ENCODE measurements at regions of chr14 and their contacts with region 1.

Region 1: GRCh38 chr14:95534299-95535225 is at the start of gene GLRX5:
- DNase-seq: peak; percentile 100
- ATAC-seq: peak; percentile 86
- H3K4me3 ChIP-seq: peak within 1 kb of the TSS; percentile 71
- H3K27ac ChIP-seq: peak within 1 kb of the TSS; percentile 90
- H3K4me1 ChIP-seq: peaks cover 13% of the 10 kb centered on the region
- H3K27me3 ChIP-seq: no peaks in the 10 kb centered on the region
- CTCF ChIP-seq: no peak
- POLR2A ChIP-seq: peak; percentile 68
- RAD21 ChIP-seq: no peak
- total RNA-seq, gene GLRX5: 32.4 and 59.2 TPM in 2 replicates

Region 2: DNA sequence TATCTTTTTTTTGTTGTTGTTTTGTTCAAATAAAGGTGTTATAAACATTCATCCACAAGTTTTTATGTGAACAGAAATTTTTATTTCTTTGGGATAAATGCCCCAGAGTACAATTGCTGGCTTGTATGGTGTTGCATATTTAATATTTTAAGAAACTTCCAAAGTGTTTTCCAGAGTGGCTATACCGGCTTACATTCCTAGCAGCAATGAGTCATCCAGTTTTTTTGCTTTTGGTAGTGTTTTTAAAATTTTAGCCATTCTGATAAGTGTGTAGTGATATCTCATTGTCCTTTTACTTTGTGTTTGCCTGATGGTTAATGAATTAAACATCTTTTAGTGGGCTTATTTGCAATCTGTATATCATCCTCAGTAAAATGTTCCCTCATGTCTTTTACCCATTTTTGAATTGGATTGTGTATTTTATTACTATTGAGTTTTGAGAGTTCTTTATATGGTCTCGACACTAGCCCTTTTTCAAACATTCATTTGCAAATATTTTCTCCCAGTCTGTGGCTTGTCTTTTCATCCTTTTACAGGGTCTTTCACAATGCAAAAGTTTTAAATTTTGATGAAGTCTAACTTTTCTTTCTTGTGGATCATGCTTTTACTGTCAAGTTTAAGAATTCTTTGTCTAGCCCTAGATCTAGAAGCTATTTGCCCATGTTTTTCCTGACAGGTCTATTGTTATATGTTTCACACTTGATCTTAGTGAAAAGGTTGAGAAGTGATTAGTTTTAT is 1330.9 kb before region 1 on chr14:
- CTCF ChIA-PET with region 1: no interaction called
- POLR2A ChIA-PET with region 1: interaction called, 12 read pairs
- dilution Hi-C with region 1: no loop called
- in situ Hi-C with region 1: no loop called
- intact Hi-C with region 1: no loop called
- DNase-seq: no peak
- ATAC-seq: no peak
- H3K4me3 ChIP-seq: no peak overlapping the region
- H3K27ac ChIP-seq: no peak overlapping the region
- H3K4me1 ChIP-seq: no peaks in the 10 kb centered on the region
- H3K27me3 ChIP-seq: no peaks in the 10 kb centered on the region; the same call in 1 of the 2 replicates
- CTCF ChIP-seq: no peak
- POLR2A ChIP-seq: no peak
- RAD21 ChIP-seq: no peak

Region 3: GRCh38 chr14:95123891-95124579 is 410.5 kb before region 1 on chr14:
- CTCF ChIA-PET with region 1: no interaction called
- POLR2A ChIA-PET with region 1: no interaction called
- dilution Hi-C with region 1: no loop called
- in situ Hi-C with region 1: no loop called
- intact Hi-C with region 1: loop called (anchors 10 kb)
- DNase-seq: no peak
- ATAC-seq: no peak
- H3K4me3 ChIP-seq: no peak overlapping the region
- H3K27ac ChIP-seq: no peak overlapping the region
- H3K4me1 ChIP-seq: peaks cover 5% of the 10 kb centered on the region
- H3K27me3 ChIP-seq: no peaks in the 10 kb centered on the region
- CTCF ChIP-seq: no peak
- POLR2A ChIP-seq: no peak
- RAD21 ChIP-seq: no peak

Region 4: DNA sequence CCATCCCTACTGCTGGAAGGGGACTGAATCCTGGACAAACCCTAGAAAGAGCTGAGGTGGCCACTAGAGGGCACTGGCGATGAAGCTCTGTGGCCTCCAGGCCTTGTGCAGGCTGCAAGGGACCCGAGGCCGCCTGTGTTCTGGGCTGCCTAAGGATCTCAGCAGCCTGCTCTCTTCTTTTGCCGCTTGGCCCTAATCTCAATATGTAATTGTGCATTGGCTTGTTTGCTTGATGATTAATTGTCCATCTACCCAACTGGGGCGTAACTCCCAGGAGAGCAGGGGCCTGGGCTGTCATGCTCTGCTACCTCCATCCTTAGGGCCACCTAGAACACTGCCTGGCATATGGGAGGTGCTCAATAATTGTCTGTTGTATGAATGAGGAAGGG is 91.9 kb before region 1 on chr14:
- CTCF ChIA-PET with region 1: interaction called, 5 read pairs
- POLR2A ChIA-PET with region 1: interaction called, 3 read pairs
- dilution Hi-C with region 1: no loop called
- in situ Hi-C with region 1: loop called (anchors 5 kb)
- intact Hi-C with region 1: loop called (anchors 1 kb)
- DNase-seq: peak; percentile 76
- ATAC-seq: peak; percentile 95
- H3K4me3 ChIP-seq: no peak overlapping the region
- H3K27ac ChIP-seq: no peak overlapping the region
- H3K4me1 ChIP-seq: peaks cover 5% of the 10 kb centered on the region
- H3K27me3 ChIP-seq: no peaks in the 10 kb centered on the region
- CTCF ChIP-seq: peak; percentile 83
- POLR2A ChIP-seq: no peak
- RAD21 ChIP-seq: peak; percentile 95

Region 5: GRCh38 chr14:96268431-96269358 is 734.1 kb after region 1 on chr14:
- CTCF ChIA-PET with region 1: no interaction called
- POLR2A ChIA-PET with region 1: no interaction called
- dilution Hi-C with region 1: no loop called
- in situ Hi-C with region 1: loop called (anchors 25 kb)
- intact Hi-C with region 1: loop called (anchors 10 kb)
- DNase-seq: peak; percentile 99
- ATAC-seq: peak; percentile 76
- H3K4me3 ChIP-seq: no peak overlapping the region
- H3K27ac ChIP-seq: peak overlapping the region; percentile 75
- H3K4me1 ChIP-seq: peaks cover 38% of the 10 kb centered on the region
- H3K27me3 ChIP-seq: no peaks in the 10 kb centered on the region
- CTCF ChIP-seq: no peak
- POLR2A ChIP-seq: 0 out of 2 replicates have a peak, but pooled peaks have one; percentile 7
- RAD21 ChIP-seq: peak; percentile 29; the same call in 1 of the 2 replicates

Region 6: GRCh38 chr14:96445844-96446710 is 911.5 kb after region 1 on chr14:
- CTCF ChIA-PET with region 1: no interaction called
- POLR2A ChIA-PET with region 1: no interaction called
- dilution Hi-C with region 1: no loop called
- in situ Hi-C with region 1: no loop called
- intact Hi-C with region 1: no loop called
- DNase-seq: no peak
- ATAC-seq: no peak
- H3K4me3 ChIP-seq: no peak overlapping the region
- H3K27ac ChIP-seq: no peak overlapping the region
- H3K4me1 ChIP-seq: no peaks in the 10 kb centered on the region
- H3K27me3 ChIP-seq: peaks cover 3% of the 10 kb centered on the region; the same call in 1 of the 2 replicates
- CTCF ChIP-seq: no peak
- POLR2A ChIP-seq: no peak
- RAD21 ChIP-seq: no peak